Right ventricle myocardium inferior (tissue), 1 donor: ENCODE measurements at regions of chr7 and their contacts with region 1.

Region 1: GRCh38 chr7:28112883-28113540 is 67.6 kb downstream of the JAZF1 start:
- DNase-seq: no peak
- ATAC-seq: peak; percentile 35

Region 2: GRCh38 chr7:28155019-28155660 is 42.1 kb after region 1 on chr7:
- intact Hi-C with region 1: no loop called
- DNase-seq: no peak
- ATAC-seq: no peak

Region 3: GRCh38 chr7:28272461-28272877 is 159.5 kb after region 1 on chr7:
- intact Hi-C with region 1: loop called (anchors 10 kb)
- DNase-seq: no peak
- ATAC-seq: peak; percentile 64